Activated CD8-positive, alpha-beta T cell treated with anti-CD3 and anti-CD28 coated beads for 36 hours (primary cell): ENCODE measurements at regions of chr7 and their contacts with region 1.

Region 1: DNA sequence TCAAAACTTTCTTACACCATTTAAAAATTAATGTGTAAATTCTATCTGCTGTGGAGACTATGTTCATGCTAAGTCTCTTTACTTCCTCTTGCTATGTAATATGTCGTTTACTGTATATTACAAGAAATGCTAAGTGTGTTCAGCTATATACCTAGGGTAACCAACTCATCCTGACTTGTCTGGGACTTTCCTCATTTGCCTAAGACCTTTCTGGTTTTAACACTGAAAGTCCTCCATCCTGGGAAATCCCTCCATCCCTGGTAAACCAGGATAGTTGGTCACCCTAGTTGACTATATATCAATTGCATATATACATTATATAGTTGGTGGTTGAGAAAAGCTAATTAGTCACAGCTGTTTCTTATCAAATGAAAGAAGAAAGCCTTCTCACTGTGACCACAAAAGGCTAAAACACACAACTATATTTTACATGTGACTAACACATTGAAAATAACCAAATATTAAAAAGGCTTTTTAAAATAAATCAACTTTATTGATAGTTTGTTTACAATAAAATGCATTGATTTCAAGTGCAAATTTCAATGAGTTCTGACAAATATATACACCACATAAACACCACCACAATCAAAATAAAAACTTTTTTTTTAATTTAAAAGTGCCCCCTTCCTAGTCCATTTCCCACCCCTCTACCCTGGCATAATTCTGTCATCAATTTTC is 167.7 kb upstream of the INHBA start:
- DNase-seq: no peak
- ATAC-seq: peak; percentile 71
- H3K4me3 Mint-ChIP-seq: no peak overlapping the region
- H3K27ac Mint-ChIP-seq: no peak overlapping the region
- H3K4me1 Mint-ChIP-seq: peaks cover 23% of the 10 kb centered on the region
- H3K27me3 Mint-ChIP-seq: peaks cover 28% of the 10 kb centered on the region
- CTCF ChIP-seq: no peak

Region 2: DNA sequence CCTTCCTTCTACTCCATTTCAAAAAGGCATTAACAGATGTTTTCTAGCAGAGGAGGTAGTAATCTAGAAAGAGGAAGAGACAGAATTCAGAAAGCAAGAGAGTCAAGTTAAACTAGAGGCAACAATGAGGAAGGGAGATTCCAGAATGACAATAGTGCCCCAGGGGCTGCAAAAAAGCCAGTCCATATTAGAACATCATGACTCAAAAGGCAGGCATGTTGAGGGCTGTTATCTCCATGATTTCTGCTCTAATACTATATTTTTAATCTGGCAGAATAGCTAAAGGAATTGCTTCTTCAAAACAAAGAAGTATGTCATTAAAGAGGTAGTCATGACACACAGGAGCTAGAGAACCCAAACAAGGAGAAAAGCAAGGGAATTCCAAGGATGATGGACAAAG is 767.3 kb before region 1 on chr7:
- CTCF ChIA-PET with region 1: no interaction called
- POLR2A ChIA-PET with region 1: no interaction called
- intact Hi-C with region 1: no loop called
- DNase-seq: no peak
- ATAC-seq: no peak
- H3K4me3 Mint-ChIP-seq: no peak overlapping the region
- H3K27ac Mint-ChIP-seq: no peak overlapping the region
- H3K4me1 Mint-ChIP-seq: no peaks in the 10 kb centered on the region
- H3K27me3 Mint-ChIP-seq: no peaks in the 10 kb centered on the region
- CTCF ChIP-seq: no peak

Region 3: GRCh38 chr7:41779918-41780317 is 90.7 kb before region 1 on chr7:
- CTCF ChIA-PET with region 1: no interaction called
- POLR2A ChIA-PET with region 1: no interaction called
- intact Hi-C with region 1: no loop called
- DNase-seq: no peak
- ATAC-seq: no peak
- H3K4me3 Mint-ChIP-seq: no peak overlapping the region
- H3K27ac Mint-ChIP-seq: no peak overlapping the region
- H3K4me1 Mint-ChIP-seq: no peaks in the 10 kb centered on the region
- H3K27me3 Mint-ChIP-seq: peaks cover 7% of the 10 kb centered on the region
- CTCF ChIP-seq: no peak

Region 4: GRCh38 chr7:41817386-41817785 is 53.2 kb before region 1 on chr7:
- CTCF ChIA-PET with region 1: no interaction called
- POLR2A ChIA-PET with region 1: no interaction called
- intact Hi-C with region 1: loop called (anchors 5 kb)
- DNase-seq: peak; percentile 69
- ATAC-seq: peak; percentile 92
- H3K4me3 Mint-ChIP-seq: no peak overlapping the region
- H3K27ac Mint-ChIP-seq: no peak overlapping the region
- H3K4me1 Mint-ChIP-seq: peaks cover 23% of the 10 kb centered on the region
- H3K27me3 Mint-ChIP-seq: peaks cover 6% of the 10 kb centered on the region
- CTCF ChIP-seq: no peak

Region 5: GRCh38 chr7:41881331-41882130 is 10.9 kb after region 1 on chr7:
- CTCF ChIA-PET with region 1: interaction called, 12 read pairs
- POLR2A ChIA-PET with region 1: interaction called, 4 read pairs
- intact Hi-C with region 1: no loop called
- DNase-seq: peak; percentile 92
- ATAC-seq: peak; percentile 96
- H3K4me3 Mint-ChIP-seq: peak overlapping the region; percentile 56
- H3K27ac Mint-ChIP-seq: peak overlapping the region; percentile 99
- H3K4me1 Mint-ChIP-seq: peaks cover 51% of the 10 kb centered on the region
- H3K27me3 Mint-ChIP-seq: no peaks in the 10 kb centered on the region
- CTCF ChIP-seq: no peak